ENCODE measurements at regions of chr7 and their contacts with region 1.

Region 1: GRCh38 chr7:154913638-154914312 is 89.1 kb downstream of the PAXIP1 start:
- DNase-seq: peak; percentile 91 to 93 (median 91)
- ATAC-seq: peak; percentile 97 to 100 (median 99)
- H3K4me3 ChIP-seq: peak overlapping the region in 2 of 3 donors; percentile 10 to 15
- H3K27ac ChIP-seq: no peak overlapping the region
- H3K4me1 ChIP-seq: peaks cover 0 to 9% (median 0%) of the 10 kb centered on the region in 4 donors
- H3K27me3 ChIP-seq: no peaks in the 10 kb centered on the region
- CTCF ChIP-seq: peak; percentile 91 to 96 (median 92)
- POLR2A ChIP-seq: no peak

Region 2: GRCh38 chr7:154431045-154431444 is 482.7 kb before region 1 on chr7:
- intact Hi-C with region 1: no loop called
- DNase-seq: no peak
- ATAC-seq: no peak
- H3K4me3 ChIP-seq: no peak overlapping the region
- H3K27ac ChIP-seq: no peak overlapping the region
- H3K4me1 ChIP-seq: no peaks in the 10 kb centered on the region
- H3K27me3 ChIP-seq: no peaks in the 10 kb centered on the region
- CTCF ChIP-seq: no peak
- POLR2A ChIP-seq: no peak

Region 3: GRCh38 chr7:154832557-154833138 is 81.1 kb before region 1 on chr7:
- intact Hi-C with region 1: loop called in 1 of 2 experiments (anchors 1 kb)
- DNase-seq: peak in 1 of 3 donors; percentile 57
- ATAC-seq: peak; percentile 85 to 94 (median 92)
- H3K4me3 ChIP-seq: no peak overlapping the region
- H3K27ac ChIP-seq: no peak overlapping the region
- H3K4me1 ChIP-seq: no peaks in the 10 kb centered on the region
- H3K27me3 ChIP-seq: no peaks in the 10 kb centered on the region
- CTCF ChIP-seq: peak; percentile 46 to 61 (median 48)
- POLR2A ChIP-seq: no peak

Measured in right lobe of liver (tissue), 6 donors.